CD8-positive, alpha-beta T cell (primary cell): ENCODE measurements at regions of chr5 and their contacts with region 1.

Region 1: GRCh38 chr5:81825237-81825636 is 74.3 kb upstream of the SSBP2 start:
- DNase-seq: no peak
- ATAC-seq: no peak
- H3K4me3 ChIP-seq: no peak overlapping the region
- H3K4me3 Mint-ChIP-seq: no peak overlapping the region
- H3K27ac ChIP-seq: no peak overlapping the region
- H3K27ac Mint-ChIP-seq: no peak overlapping the region
- H3K4me1 ChIP-seq: no peaks in the 10 kb centered on the region
- H3K4me1 Mint-ChIP-seq: peaks cover 10% of the 10 kb centered on the region
- H3K27me3 ChIP-seq: no peaks in the 10 kb centered on the region
- H3K27me3 Mint-ChIP-seq: no peaks in the 10 kb centered on the region
- CTCF ChIP-seq: no peak

Region 2: DNA sequence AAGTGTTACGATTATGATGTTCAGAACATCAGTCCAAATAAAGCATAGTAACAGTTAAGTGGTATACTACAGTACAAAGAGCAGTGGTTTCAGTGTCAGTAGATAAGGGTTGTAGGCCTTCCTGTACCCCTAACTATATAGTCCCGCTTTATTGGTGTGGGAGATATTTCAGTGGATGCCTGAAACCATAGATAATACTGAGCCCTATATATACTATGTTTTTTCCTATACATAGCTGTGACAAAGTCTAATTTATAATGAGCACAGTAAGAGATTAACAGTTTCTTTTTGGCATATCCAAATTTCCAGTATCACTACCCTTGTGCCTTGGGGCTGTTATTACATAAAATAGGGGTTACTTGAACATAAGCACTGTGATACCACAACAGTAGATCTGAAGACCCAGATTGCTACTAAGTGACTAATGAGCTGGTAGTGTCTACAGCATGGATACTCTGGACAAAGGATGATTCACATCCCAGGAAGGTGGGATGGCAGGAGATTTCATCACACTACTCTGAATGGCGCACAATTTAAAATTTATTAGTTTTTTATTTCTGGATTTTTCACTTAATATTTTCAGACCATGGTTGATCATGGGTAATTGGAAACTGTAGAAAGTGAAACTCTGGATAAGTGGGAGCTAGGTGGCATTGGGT is 333.6 kb after region 1 on chr5:
- CTCF ChIA-PET with region 1: no interaction called
- POLR2A ChIA-PET with region 1: no interaction called
- intact Hi-C with region 1: loop called in 1 of 2 experiments (anchors 1 kb)
- DNase-seq: no peak
- ATAC-seq: no peak
- H3K4me3 ChIP-seq: no peak overlapping the region
- H3K4me3 Mint-ChIP-seq: no peak overlapping the region
- H3K27ac ChIP-seq: no peak overlapping the region
- H3K27ac Mint-ChIP-seq: no peak overlapping the region
- H3K4me1 ChIP-seq: no peaks in the 10 kb centered on the region
- H3K4me1 Mint-ChIP-seq: no peaks in the 10 kb centered on the region
- H3K27me3 ChIP-seq: no peaks in the 10 kb centered on the region
- H3K27me3 Mint-ChIP-seq: no peaks in the 10 kb centered on the region
- CTCF ChIP-seq: no peak